K562 (cell line): ENCODE measurements at regions of chr4 and their contacts with region 1.

Region 1: GRCh38 chr4:184080674-184081073 is 137.0 kb downstream of the ENPP6 start:
- DNase-seq: no peak
- ATAC-seq: no peak
- H3K4me3 ChIP-seq: no peak overlapping the region
- H3K27ac ChIP-seq: no peak overlapping the region
- H3K4me1 ChIP-seq: no peaks in the 10 kb centered on the region
- H3K27me3 ChIP-seq: peaks cover 6 to 46% of the 10 kb centered on the region in 2 experiments; a peak in 3 of 5 replicates
- CTCF ChIP-seq: no peak
- EP300 ChIP-seq: no peak
- POLR2A ChIP-seq: no peak
- RAD21 ChIP-seq: no peak

Region 2: DNA sequence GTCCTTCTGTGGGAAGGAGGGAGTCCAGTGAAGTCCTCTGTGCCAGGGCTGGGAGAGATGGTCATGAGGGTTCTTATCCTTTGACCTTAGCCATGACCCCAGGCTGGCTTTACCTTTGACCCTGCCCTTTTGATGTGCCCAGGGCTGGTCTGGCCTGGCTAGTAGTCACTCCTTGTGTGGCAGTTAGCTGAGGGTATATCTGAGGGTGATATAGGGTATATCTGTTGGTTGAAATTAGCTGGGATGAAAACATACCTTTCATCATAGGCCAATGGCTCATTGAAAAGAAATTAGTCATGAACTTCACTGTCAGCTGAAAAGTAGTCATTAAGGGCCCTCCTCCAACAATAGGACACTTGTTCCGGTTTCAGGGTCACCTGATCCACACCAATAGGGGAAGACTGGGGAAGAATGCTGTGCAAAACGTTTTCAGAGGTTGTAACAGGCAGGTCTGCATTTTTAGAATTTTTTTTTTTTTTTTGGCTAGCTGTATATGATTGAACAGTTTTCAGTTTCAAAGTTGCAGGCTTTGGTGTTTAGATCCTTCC is 250.2 kb before region 1 on chr4:
- CTCF ChIA-PET with region 1: no interaction called
- POLR2A ChIA-PET with region 1: no interaction called
- in situ Hi-C with region 1: loop called (anchors 5 kb)
- intact Hi-C with region 1: no loop called
- DNase-seq: no peak
- ATAC-seq: no peak
- H3K4me3 ChIP-seq: no peak overlapping the region
- H3K27ac ChIP-seq: no peak overlapping the region
- H3K4me1 ChIP-seq: no peaks in the 10 kb centered on the region
- H3K27me3 ChIP-seq: peaks cover 20 to 30% of the 10 kb centered on the region in 2 experiments
- CTCF ChIP-seq: no peak
- EP300 ChIP-seq: no peak
- POLR2A ChIP-seq: no peak
- RAD21 ChIP-seq: no peak